Mammary epithelial cell (primary cell): ENCODE measurements at regions of chr10 and their contacts with region 1.

Region 1: DNA sequence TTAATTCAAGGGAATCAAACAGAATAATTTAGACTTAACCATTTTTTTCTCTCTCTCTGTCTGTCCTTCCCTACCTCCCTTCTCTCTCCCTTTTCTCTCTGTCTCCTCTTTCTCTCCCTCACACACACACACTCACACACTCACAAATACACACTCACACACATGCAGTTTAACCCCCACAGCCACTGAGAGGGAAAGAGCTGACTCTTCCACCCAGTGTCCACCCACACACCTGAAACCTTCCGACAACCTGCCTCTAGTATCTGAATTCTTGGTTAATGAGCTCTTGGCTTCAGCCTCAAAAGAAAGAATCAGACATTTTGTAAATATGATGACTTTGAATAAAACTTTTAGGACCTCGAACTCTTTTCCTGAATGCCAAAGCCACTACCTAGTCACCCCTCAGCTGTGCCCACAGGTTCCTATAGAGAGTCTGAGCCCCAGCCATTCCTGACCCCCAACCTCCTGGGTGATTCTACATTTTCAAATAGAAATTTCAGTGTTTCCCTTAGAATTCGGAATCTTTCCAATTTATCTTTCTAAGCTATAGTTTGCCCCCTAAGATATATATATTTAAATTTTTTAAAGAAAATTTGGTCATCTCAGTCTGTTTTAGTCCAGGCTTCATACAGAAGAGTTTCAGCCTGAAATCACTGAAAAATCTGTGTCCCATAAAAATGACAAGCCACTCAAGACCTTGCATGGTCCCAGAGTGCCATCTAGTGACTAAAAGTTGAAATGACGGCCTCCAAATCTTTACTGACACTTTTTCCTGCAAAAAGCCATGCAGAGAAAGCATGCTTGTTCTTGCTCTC is 202.8 kb downstream of the IPMK start:
- DNase-seq: peak; percentile 43
- H3K4me3 ChIP-seq: no peak overlapping the region
- H3K27ac ChIP-seq: no peak overlapping the region
- H3K4me1 ChIP-seq: no peaks in the 10 kb centered on the region
- H3K27me3 ChIP-seq: no peaks in the 10 kb centered on the region
- CTCF ChIP-seq: peak; percentile 76 to 86

Region 2: DNA sequence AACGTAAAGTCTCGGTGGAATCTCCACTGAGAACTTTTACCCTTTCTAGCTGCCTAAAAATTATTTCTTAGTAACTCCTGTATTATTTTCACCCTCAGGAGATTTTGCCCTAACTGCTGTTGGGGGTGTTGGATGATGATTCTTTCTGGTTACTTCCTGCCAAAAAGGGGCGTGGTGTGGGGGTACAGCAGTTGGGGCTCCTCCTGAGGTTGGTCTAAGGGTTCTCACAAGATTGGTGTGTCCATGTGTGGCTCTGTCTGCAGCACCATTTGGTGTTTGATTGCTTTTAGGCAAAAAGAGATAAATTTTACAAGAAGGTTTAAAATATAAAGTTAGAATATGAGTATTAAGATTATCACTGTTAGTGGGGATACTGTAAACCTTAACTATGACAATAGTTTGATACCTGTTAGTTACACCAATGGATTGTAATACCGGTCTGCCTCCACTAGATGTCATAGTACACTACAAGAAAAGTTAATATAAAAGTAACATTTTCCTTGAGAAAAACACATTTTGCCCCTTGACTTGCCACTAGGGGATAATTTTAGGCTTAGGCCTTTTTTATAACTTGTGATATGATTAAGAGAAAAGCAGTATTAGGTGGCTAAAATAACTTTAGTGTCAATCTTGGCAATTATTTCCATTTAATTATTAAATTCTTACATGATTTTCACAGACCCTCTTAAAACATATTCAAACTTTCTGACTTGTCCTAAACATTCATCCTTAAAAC is 725.9 kb before region 1 on chr10:
- CTCF ChIA-PET with region 1: no interaction called
- dilution Hi-C with region 1: no loop called
- in situ Hi-C with region 1: loop called in 1 of 2 experiments (anchors 25 kb)
- intact Hi-C with region 1: loop called (anchors 1 kb)
- DNase-seq: peak; percentile 12
- H3K4me3 ChIP-seq: no peak overlapping the region
- H3K27ac ChIP-seq: no peak overlapping the region
- H3K4me1 ChIP-seq: no peaks in the 10 kb centered on the region
- H3K27me3 ChIP-seq: no peaks in the 10 kb centered on the region
- CTCF ChIP-seq: peak; percentile 52 to 70

Region 3: GRCh38 chr10:57657164-57657765 is 407.7 kb before region 1 on chr10:
- CTCF ChIA-PET with region 1: interaction called, 3 read pairs
- dilution Hi-C with region 1: no loop called
- in situ Hi-C with region 1: no loop called
- intact Hi-C with region 1: loop called (anchors 5 kb)
- DNase-seq: peak; percentile 30
- H3K4me3 ChIP-seq: no peak overlapping the region
- H3K27ac ChIP-seq: no peak overlapping the region
- H3K4me1 ChIP-seq: no peaks in the 10 kb centered on the region
- H3K27me3 ChIP-seq: peaks cover 2% of the 10 kb centered on the region
- CTCF ChIP-seq: peak; percentile 80 to 87

Region 4: GRCh38 chr10:57849691-57850357 is 215.1 kb before region 1 on chr10:
- CTCF ChIA-PET with region 1: no interaction called
- dilution Hi-C with region 1: no loop called
- in situ Hi-C with region 1: no loop called
- intact Hi-C with region 1: loop called (anchors 1 kb)
- DNase-seq: peak; percentile 13
- H3K4me3 ChIP-seq: no peak overlapping the region
- H3K27ac ChIP-seq: no peak overlapping the region
- H3K4me1 ChIP-seq: no peaks in the 10 kb centered on the region
- H3K27me3 ChIP-seq: no peaks in the 10 kb centered on the region
- CTCF ChIP-seq: peak; percentile 50 to 53

Region 5: GRCh38 chr10:58094985-58095718 is 30.2 kb after region 1 on chr10:
- CTCF ChIA-PET with region 1: no interaction called
- dilution Hi-C with region 1: no loop called
- in situ Hi-C with region 1: no loop called
- intact Hi-C with region 1: no loop called
- DNase-seq: no peak
- H3K4me3 ChIP-seq: no peak overlapping the region
- H3K27ac ChIP-seq: no peak overlapping the region
- H3K4me1 ChIP-seq: no peaks in the 10 kb centered on the region
- H3K27me3 ChIP-seq: no peaks in the 10 kb centered on the region
- CTCF ChIP-seq: no peak

Region 6: DNA sequence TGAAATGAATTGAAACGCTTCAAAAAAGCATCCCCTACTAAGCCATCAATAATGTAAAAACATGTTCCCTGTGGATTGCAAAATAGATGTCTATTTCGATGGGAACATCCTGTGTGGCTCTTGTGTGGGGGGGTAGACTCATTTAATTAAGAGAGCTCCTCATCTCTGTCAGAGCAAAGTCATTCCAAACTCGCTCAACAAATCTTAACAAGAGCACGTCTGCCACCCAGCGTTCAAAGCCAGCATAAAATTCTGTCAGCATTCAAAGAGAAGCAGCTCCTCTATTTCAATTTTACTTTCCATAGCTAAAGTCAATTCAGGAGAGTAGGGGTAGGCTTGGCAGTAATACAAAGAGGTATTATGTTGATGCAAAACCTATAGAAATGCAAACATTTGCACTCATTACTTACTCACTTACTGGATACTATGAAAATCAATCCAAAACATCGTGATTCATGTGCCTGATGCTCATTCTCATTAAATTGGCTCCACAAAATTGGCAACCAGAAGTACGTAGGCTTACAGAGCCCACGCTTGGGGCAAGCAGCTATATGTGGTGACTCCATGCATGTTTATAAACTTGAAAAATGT is 87.8 kb after region 1 on chr10:
- CTCF ChIA-PET with region 1: interaction called, 4 read pairs
- dilution Hi-C with region 1: no loop called
- in situ Hi-C with region 1: no loop called
- intact Hi-C with region 1: loop called (anchors 1 kb)
- DNase-seq: peak; percentile 52
- H3K4me3 ChIP-seq: no peak overlapping the region
- H3K27ac ChIP-seq: no peak overlapping the region
- H3K4me1 ChIP-seq: peaks cover 9% of the 10 kb centered on the region
- H3K27me3 ChIP-seq: peaks cover 4% of the 10 kb centered on the region
- CTCF ChIP-seq: peak; percentile 72 to 74

Region 7: GRCh38 chr10:58237014-58237830 is 172.3 kb after region 1 on chr10:
- CTCF ChIA-PET with region 1: no interaction called
- dilution Hi-C with region 1: no loop called
- in situ Hi-C with region 1: no loop called
- intact Hi-C with region 1: no loop called
- DNase-seq: peak; percentile 68
- H3K4me3 ChIP-seq: no peak overlapping the region
- H3K27ac ChIP-seq: peak overlapping the region; percentile 19
- H3K4me1 ChIP-seq: peaks cover 34% of the 10 kb centered on the region
- H3K27me3 ChIP-seq: no peaks in the 10 kb centered on the region
- CTCF ChIP-seq: no peak

Region 8: DNA sequence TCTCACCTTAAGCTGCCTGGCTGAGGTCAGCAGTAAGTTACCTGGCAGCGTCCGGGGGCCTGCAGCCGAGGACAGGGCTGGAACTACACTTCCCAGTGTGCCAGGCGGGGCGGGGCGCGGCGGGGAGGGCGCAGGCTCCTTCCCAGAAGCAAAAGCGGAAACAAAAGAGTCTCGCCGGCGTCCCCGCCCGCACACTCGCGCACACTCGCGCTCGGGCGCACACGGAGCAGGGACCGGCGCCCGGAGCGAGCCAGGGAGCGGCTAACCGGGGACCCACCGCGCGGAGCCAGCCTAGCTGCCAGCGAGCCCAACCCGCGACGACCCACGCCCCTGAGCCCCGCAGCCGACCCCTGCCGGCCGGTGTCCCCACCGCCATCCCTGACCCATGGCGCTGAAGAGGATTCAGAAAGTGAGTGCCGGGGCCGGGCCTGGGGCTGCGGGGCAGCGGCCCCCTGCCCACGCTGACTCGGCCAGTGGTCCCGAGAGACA is 269.9 kb after region 1 on chr10 and contains the start of gene UBE2D1:
- CTCF ChIA-PET with region 1: no interaction called
- dilution Hi-C with region 1: no loop called
- in situ Hi-C with region 1: no loop called
- intact Hi-C with region 1: no loop called
- DNase-seq: peak; percentile 74
- H3K4me3 ChIP-seq: peak within 1 kb of the TSS; percentile 83 to 95 (median 93)
- H3K27ac ChIP-seq: peak within 1 kb of the TSS; percentile 74
- H3K4me1 ChIP-seq: peaks cover 6% of the 10 kb centered on the region
- H3K27me3 ChIP-seq: no peaks in the 10 kb centered on the region
- CTCF ChIP-seq: no peak
- total RNA-seq, gene UBE2D1: 13.9 to 15.5 TPM